ENCODE measurements at regions of chr6 and their contacts with region 1.

Region 1: DNA sequence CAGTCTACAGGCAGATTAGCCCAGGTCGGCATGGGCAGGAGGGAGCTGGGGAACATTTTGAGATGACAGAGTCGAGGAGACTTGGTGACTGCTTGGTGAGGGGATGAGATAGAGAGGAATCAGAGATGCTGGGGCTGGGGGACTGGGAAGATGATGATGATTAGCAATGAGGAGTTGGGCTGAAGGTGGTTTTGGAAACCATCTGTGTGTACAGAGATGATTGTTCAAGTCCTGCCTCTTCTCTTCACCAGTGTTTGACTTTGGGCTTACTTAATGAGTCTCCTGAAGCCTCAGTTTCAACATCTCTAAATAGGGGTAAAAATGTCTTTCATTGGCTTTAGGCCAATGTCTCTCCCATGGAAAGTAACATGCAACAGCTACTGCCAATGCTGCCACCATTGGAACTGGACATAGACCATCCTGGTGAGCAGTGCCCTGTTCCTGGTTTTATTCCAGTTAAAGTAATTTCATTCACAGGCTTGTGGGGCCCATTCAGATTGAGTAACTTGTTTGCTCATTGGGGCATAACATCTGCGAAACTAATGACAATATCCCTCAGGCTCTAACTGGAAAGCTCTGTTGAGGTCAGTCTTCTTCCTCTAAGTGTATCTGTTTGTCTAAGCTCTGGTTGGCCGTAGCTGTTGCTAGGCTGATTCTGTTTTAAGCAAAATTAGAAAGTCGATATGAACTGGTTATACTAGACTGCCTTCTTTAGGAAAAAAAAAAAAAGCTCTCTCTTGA is 99.1 kb downstream of the ARMC2 start:
- DNase-seq: no peak
- ATAC-seq: peak; percentile 41

Region 2: GRCh38 chr6:108848116-108848868 is 99.0 kb before region 1 on chr6 and contains the start of gene ARMC2:
- intact Hi-C with region 1: loop called (anchors 2 kb)
- DNase-seq: peak; percentile 98
- ATAC-seq: peak; percentile 98
- total RNA-seq, gene ARMC2: 9.5 TPM

Region 3: DNA sequence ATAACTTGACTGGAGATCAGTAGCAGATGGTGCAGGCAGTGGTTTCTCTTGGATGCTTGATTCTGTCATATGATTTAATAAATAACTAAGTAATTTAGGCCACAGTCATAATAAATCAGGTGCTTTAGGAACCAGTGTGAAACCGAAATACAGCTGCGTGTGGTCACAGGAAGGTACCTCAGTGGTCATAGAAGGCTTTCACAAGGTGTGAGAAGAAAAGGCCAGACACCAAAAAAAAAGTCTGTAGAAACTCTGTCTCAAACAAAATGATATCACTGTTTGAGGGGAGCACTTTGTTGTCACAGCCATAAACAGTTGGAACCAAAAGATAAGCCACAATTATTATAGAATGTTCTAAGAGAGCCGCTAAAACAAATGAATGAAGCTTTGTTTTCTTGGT is 42.5 kb before region 1 on chr6:
- intact Hi-C with region 1: loop called (anchors 2 kb)
- DNase-seq: no peak
- ATAC-seq: no peak

Region 4: GRCh38 chr6:108966855-108967755 is 19.8 kb after region 1 on chr6:
- intact Hi-C with region 1: loop called (anchors 2 kb)
- DNase-seq: peak; percentile 73
- ATAC-seq: peak; percentile 63

Region 5: GRCh38 chr6:109009236-109009961 is 62.1 kb after region 1 on chr6:
- intact Hi-C with region 1: loop called (anchors 2 kb)
- DNase-seq: peak; percentile 99
- ATAC-seq: peak; percentile 97

Region 6: GRCh38 chr6:110039364-110039980 is 1092.2 kb after region 1 on chr6:
- intact Hi-C with region 1: no loop called
- DNase-seq: peak; percentile 90
- ATAC-seq: peak; percentile 94